ENCODE measurements at regions of chr4 and their contacts with region 1.

Region 1: GRCh38 chr4:15479089-15479912 is 9.6 kb downstream of the CC2D2A start:
- DNase-seq: peak in 4 of 5 donors; percentile 27 to 41 (median 38)
- ATAC-seq: peak; percentile 57 to 88 (median 80)
- H3K4me3 ChIP-seq: peak overlapping the region in 10 of 12 donors; percentile 26 to 55 (median 41)
- H3K27ac ChIP-seq: peak overlapping the region in 11 of 12 donors; percentile 31 to 84 (median 64)
- H3K4me1 ChIP-seq: peaks cover 0 to 29% (median 2%) of the 10 kb centered on the region in 12 donors
- H3K27me3 ChIP-seq: no peaks in the 10 kb centered on the region
- CTCF ChIP-seq: peak; percentile 31 to 73 (median 64)
- POLR2A ChIP-seq: no peak

Region 2: DNA sequence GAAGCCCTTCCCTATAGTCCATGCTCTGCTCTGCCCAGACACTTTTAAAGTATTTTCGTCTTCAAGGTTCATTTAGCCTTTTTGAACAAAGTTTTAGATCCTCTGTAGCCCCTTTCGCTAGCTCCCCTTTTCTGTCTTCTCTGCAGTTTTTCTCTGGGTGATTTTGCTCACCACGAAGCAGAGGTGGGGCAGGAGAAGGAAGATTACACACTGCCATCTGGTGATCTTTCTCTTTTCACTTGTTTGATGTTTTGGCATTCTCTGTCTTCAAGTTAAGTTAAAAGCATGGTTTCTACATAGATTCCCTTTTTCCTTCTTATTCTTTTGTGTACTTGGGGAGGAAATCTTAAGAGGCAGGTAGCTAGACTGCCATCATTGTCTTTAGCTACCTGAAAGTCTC is 34.2 kb after region 1 on chr4:
- intact Hi-C with region 1: loop called in 1 of 10 experiments (anchors 2 kb)
- DNase-seq: no peak
- ATAC-seq: no peak
- H3K4me3 ChIP-seq: no peak overlapping the region
- H3K27ac ChIP-seq: no peak overlapping the region
- H3K4me1 ChIP-seq: no peaks in the 10 kb centered on the region
- H3K27me3 ChIP-seq: no peaks in the 10 kb centered on the region
- CTCF ChIP-seq: peak in 4 of 12 donors; percentile 12 to 22 (median 17)
- POLR2A ChIP-seq: no peak

Region 3: DNA sequence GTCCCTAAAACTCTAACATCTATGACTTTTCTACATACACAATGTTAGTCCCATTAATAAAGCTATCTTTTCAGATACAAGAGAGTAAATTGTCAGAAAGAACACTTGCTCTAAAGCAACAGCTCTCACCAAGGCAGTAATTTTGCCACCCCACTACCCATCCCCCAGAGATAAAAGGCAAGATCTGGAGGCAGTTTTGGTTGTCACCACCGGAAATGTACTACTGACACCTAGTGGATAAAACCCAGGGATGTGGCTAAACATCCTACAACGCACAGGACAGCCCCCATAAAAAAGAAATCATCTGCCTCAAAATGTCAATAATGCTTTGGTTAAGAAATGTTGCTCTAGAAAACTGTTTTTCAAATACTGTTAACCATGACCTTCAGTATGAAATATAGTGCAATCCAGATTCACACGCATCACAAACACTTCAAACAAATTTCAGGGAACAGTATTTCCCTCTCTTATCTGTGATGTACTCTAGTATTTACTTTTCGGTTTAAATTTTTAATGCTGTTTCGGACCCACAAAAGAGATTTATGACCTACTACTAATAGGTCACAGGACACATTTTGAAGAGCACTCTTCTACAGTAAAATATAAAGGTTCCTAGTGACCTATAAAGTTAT is 170.7 kb after region 1 on chr4:
- intact Hi-C with region 1: loop called in 8 of 10 experiments (anchors 2 to 10 kb)
- DNase-seq: peak in 2 of 5 donors; percentile 35 to 40
- ATAC-seq: peak; percentile 43 to 75 (median 68)
- H3K4me3 ChIP-seq: no peak overlapping the region
- H3K27ac ChIP-seq: peak overlapping the region in 5 of 12 donors; percentile 10 to 98 (median 15)
- H3K4me1 ChIP-seq: peaks cover 6 to 81% (median 51%) of the 10 kb centered on the region in 12 donors
- H3K27me3 ChIP-seq: no peaks in the 10 kb centered on the region
- CTCF ChIP-seq: peak; percentile 43 to 75 (median 62)
- POLR2A ChIP-seq: no peak

Region 4: DNA sequence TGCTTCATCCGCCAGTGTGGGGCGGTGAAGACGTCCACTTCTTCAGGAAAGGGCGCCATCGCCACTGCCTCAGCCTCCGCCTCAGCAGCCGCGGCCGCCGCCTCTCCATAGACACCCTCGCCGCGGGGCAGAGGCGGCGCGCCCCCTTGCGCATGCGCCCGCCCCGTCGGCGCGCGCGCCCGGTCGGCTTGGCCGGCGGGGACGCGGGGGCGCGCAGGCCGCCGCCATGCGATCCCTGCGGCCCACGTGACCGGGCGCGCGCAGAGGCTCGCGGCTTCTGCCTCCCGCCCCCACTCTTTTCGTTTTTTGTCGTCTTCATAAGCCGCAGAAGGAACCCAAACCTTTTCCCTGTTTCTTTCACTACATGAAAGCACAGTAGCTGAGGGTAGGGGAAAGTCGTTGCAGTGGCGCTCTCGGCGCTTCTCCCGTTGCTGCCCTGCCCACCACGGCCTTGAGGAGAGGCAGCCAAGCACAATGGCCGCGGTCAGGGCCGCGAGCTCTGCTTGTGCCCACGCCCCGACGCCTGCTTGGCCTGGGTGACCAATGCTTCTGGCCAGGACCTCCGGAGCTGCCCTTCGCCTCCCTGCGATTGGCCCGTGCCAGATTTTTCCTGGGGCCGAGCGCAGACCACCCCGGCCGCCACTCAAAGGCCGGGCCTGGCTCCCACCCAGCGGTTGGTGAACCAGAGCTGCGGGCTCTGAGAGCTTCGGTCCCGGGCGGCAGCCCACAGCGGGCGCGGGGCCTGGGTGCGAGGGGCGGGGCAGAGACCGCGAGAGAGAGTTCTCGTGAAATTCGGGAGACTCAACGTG is 176.1 kb after region 1 on chr4 and contains the start of gene FBXL5:
- intact Hi-C with region 1: loop called in 5 of 10 experiments (anchors 5 to 10 kb)
- DNase-seq: peak; percentile 79 to 92 (median 84)
- ATAC-seq: peak; percentile 65 to 92 (median 87)
- H3K4me3 ChIP-seq: peak within 1 kb of the TSS; percentile 66 to 91 (median 76)
- H3K27ac ChIP-seq: peak within 1 kb of the TSS; percentile 96 to 100 (median 99)
- H3K4me1 ChIP-seq: peaks cover 6 to 77% (median 38%) of the 10 kb centered on the region in 12 donors
- H3K27me3 ChIP-seq: no peaks in the 10 kb centered on the region
- CTCF ChIP-seq: no peak
- POLR2A ChIP-seq: peak in 1 of 2 donors; percentile 59
- total RNA-seq, gene FBXL5: 71.1 to 112 (median 82.1) TPM

Region 5: GRCh38 chr4:15882675-15883086 is 403.4 kb after region 1 on chr4:
- intact Hi-C with region 1: loop called in 1 of 10 experiments (anchors 10 kb)
- DNase-seq: peak in 4 of 5 donors; percentile 39 to 53 (median 42)
- ATAC-seq: peak; percentile 73 to 89 (median 85)
- H3K4me3 ChIP-seq: no peak overlapping the region
- H3K27ac ChIP-seq: no peak overlapping the region
- H3K4me1 ChIP-seq: peaks cover 0 to 3% (median 0%) of the 10 kb centered on the region in 12 donors
- H3K27me3 ChIP-seq: no peaks in the 10 kb centered on the region
- CTCF ChIP-seq: peak; percentile 74 to 92 (median 88)
- POLR2A ChIP-seq: no peak

Region 6: DNA sequence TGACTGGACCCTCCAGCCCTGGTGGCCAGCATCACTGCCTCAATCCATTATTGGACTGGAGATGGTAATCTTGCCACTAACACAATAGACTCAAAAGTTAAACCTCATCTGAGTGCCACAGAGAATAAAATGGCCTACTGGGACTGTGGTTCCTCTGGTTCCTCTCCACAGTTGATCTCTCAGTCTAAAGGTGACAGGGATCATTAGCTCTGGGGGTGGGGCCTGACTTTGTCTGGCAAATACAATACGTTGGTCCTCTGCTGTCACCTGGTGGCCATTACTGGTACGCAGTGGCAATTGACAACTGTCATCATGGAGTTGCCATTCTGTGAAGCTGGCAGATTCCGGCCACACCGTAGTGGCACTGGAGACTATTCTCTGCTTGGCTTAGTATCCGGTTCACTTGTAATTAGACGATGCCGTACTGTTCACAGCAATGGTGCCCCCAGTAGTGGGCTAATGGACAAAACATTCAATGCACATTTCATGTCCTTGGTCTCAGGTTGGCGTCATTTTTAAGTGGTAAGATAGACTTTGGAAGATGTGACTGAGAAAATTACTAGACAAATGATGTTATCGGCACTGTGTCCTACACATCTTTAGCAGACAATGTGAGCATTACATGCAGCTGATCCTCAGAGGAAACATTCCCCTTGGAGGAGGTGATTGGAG is 477.0 kb after region 1 on chr4:
- intact Hi-C with region 1: loop called in 7 of 10 experiments (anchors 2 to 5 kb)
- DNase-seq: peak; percentile 60 to 83 (median 72)
- ATAC-seq: peak in 3 of 4 donors; percentile 85 to 92 (median 86)
- H3K4me3 ChIP-seq: no peak overlapping the region
- H3K27ac ChIP-seq: no peak overlapping the region
- H3K4me1 ChIP-seq: peaks cover 0 to 4% (median 0%) of the 10 kb centered on the region in 12 donors
- H3K27me3 ChIP-seq: no peaks in the 10 kb centered on the region
- CTCF ChIP-seq: peak; percentile 82 to 93 (median 86)
- POLR2A ChIP-seq: no peak

Region 7: GRCh38 chr4:16001484-16001858 is 522.2 kb after region 1 on chr4:
- intact Hi-C with region 1: loop called in 6 of 10 experiments (anchors 5 to 10 kb)
- DNase-seq: peak in 4 of 5 donors; percentile 45 to 64 (median 60)
- ATAC-seq: peak; percentile 70 to 97 (median 92)
- H3K4me3 ChIP-seq: no peak overlapping the region
- H3K27ac ChIP-seq: no peak overlapping the region
- H3K4me1 ChIP-seq: peaks cover 0 to 13% (median 0%) of the 10 kb centered on the region in 12 donors
- H3K27me3 ChIP-seq: no peaks in the 10 kb centered on the region
- CTCF ChIP-seq: peak; percentile 75 to 89 (median 82)
- POLR2A ChIP-seq: no peak

Measured in heart left ventricle (tissue), 16 donors.